ENCODE measurements at regions of chr20 and their contacts with region 1.

Region 1: DNA sequence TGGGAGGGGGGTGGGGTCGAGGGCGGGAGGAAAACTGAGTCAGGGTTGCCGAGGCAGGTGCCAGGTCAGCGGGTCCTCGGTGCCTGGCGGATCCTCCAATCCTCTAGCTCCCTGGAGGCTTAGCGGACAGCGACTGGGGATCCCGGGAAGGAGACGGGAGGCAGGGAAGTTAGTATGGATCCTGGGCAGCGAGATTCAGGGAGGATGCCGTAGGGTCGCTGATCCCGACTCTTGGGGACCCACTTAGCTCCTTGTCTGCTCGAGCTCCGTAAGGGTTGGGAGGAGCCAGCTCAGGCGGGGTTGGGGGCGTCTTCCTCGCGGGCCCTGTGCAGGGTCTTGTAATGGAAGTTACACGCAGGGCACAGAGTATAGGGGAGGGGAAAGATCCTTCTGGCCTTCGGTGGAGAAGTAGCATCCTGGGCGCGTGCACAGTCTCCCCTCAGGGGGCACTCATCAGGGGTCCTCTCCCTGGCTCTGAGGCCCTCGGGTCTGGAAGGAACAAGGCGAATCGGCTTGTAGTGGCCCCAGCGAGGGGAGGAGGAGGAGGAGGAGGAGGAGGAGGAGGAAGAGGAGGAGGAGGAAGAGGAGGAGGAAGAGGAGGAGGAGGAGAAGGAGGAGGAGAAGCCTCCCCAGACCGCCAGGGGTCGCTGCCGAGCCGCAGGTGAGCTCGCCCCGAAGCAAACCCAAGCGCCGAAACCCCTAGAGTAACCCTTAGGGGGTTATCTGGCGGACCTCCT is 6.4 kb upstream of the SLC12A5 start:
- DNase-seq: peak; percentile 56
- H3K4me3 Mint-ChIP-seq: peak overlapping the region; percentile 69
- H3K27ac Mint-ChIP-seq: no peak overlapping the region
- H3K4me1 Mint-ChIP-seq: peaks cover 15% of the 10 kb centered on the region
- H3K27me3 Mint-ChIP-seq: peaks cover 37% of the 10 kb centered on the region

Region 2: DNA sequence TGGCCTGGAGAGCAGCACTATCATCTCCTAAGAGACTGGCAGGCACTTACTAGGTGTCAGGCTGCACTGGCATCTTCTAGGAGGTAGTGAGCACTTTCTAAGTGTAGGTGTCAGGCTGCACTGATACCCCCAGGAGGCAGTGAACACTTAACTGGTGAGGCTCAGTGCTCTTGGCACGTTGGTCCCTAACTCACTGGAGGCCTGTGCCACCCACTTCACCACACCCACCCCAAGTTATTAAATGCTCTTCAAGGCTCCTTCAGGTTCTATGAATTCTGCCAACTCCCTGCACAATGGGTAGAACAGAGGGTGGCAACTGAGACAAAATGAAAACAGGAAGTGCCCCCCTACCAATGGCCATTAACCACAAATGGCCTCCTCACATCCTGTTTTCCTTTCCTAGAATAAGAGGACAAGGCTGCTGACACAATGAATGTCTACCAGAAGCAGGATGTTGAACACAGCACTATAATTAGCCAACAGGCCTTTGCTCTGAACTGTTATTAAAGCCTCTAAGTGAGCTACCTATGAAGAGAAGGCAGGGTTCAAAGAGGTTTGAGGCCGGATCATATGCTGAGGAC is 37.8 kb after region 1 on chr20:
- intact Hi-C with region 1: loop called (anchors 5 kb)
- DNase-seq: no peak
- H3K4me3 Mint-ChIP-seq: no peak overlapping the region
- H3K27ac Mint-ChIP-seq: peak overlapping the region; percentile 31
- H3K4me1 Mint-ChIP-seq: peaks cover 49% of the 10 kb centered on the region
- H3K27me3 Mint-ChIP-seq: peaks cover 29% of the 10 kb centered on the region

Region 3: GRCh38 chr20:46089417-46090388 is 67.1 kb after region 1 on chr20 and contains the start of gene NCOA5:
- intact Hi-C with region 1: loop called (anchors 1 kb)
- DNase-seq: peak; percentile 93
- H3K4me3 Mint-ChIP-seq: peak within 1 kb of the TSS; percentile 91
- H3K27ac Mint-ChIP-seq: peak within 1 kb of the TSS; percentile 87
- H3K4me1 Mint-ChIP-seq: peaks cover 28% of the 10 kb centered on the region
- H3K27me3 Mint-ChIP-seq: peaks cover 1% of the 10 kb centered on the region
- total RNA-seq, gene NCOA5: 27.5 and 28.7 TPM in 2 replicates

Region 4: GRCh38 chr20:46174469-46175128 is 152.0 kb after region 1 on chr20:
- intact Hi-C with region 1: loop called (anchors 2 kb)
- DNase-seq: peak; percentile 46
- H3K4me3 Mint-ChIP-seq: no peak overlapping the region
- H3K27ac Mint-ChIP-seq: no peak overlapping the region
- H3K4me1 Mint-ChIP-seq: no peaks in the 10 kb centered on the region
- H3K27me3 Mint-ChIP-seq: peaks cover 39% of the 10 kb centered on the region